PC-9 (cell line): ENCODE measurements at regions of chr2 and their contacts with region 1.

Region 1: GRCh38 chr2:235330775-235331451 is 162.9 kb upstream of the AGAP1 start:
- DNase-seq: peak; percentile 83 to 95
- H3K4me3 ChIP-seq: peak overlapping the region; percentile 20; the same call in 1 of the 2 replicates
- H3K27ac ChIP-seq: peak overlapping the region; percentile 46
- H3K4me1 ChIP-seq: peaks cover 19% of the 10 kb centered on the region
- H3K27me3 ChIP-seq: no peaks in the 10 kb centered on the region
- CTCF ChIP-seq: no peak

Region 2: GRCh38 chr2:235087812-235088495 is 243.0 kb before region 1 on chr2:
- CTCF ChIA-PET with region 1: no interaction called
- POLR2A ChIA-PET with region 1: no interaction called
- intact Hi-C with region 1: no loop called
- DNase-seq: no peak
- H3K4me3 ChIP-seq: no peak overlapping the region
- H3K27ac ChIP-seq: no peak overlapping the region
- H3K4me1 ChIP-seq: no peaks in the 10 kb centered on the region
- H3K27me3 ChIP-seq: no peaks in the 10 kb centered on the region
- CTCF ChIP-seq: no peak

Region 3: DNA sequence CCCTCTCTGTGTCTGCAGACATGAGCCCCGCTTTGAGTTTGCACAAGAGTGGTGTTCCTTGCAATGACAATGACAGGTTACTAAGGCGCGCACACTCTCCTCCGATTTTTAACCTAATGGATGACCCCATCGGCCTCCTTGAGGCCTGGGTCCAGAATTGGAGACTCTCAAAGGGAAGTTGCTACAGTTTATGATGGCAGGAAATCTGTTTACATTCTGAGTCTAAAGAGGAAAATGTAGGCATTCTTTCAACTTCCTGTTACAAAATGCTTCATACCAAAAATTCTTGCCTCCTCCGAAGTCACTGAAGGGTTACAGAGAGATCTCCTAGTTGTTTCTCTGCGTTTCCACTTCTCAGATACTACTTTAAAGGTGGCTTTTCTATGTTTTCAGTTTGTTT is 62.4 kb before region 1 on chr2:
- CTCF ChIA-PET with region 1: no interaction called
- POLR2A ChIA-PET with region 1: no interaction called
- intact Hi-C with region 1: loop called (anchors 5 kb)
- DNase-seq: peak; percentile 10 to 79
- H3K4me3 ChIP-seq: no peak overlapping the region
- H3K27ac ChIP-seq: peak overlapping the region; percentile 44
- H3K4me1 ChIP-seq: peaks cover 45% of the 10 kb centered on the region
- H3K27me3 ChIP-seq: no peaks in the 10 kb centered on the region
- CTCF ChIP-seq: no peak

Region 4: GRCh38 chr2:235314371-235314930 is 16.5 kb before region 1 on chr2:
- CTCF ChIA-PET with region 1: no interaction called
- POLR2A ChIA-PET with region 1: interaction called, 21 read pairs
- intact Hi-C with region 1: no loop called
- DNase-seq: no peak
- H3K4me3 ChIP-seq: no peak overlapping the region
- H3K27ac ChIP-seq: no peak overlapping the region
- H3K4me1 ChIP-seq: peaks cover 12% of the 10 kb centered on the region
- H3K27me3 ChIP-seq: no peaks in the 10 kb centered on the region
- CTCF ChIP-seq: no peak

Region 5: GRCh38 chr2:235406430-235406829 is 75.5 kb after region 1 on chr2:
- CTCF ChIA-PET with region 1: no interaction called
- POLR2A ChIA-PET with region 1: interaction called, 11 read pairs
- intact Hi-C with region 1: no loop called
- DNase-seq: no peak
- H3K4me3 ChIP-seq: no peak overlapping the region
- H3K27ac ChIP-seq: no peak overlapping the region
- H3K4me1 ChIP-seq: peaks cover 15% of the 10 kb centered on the region
- H3K27me3 ChIP-seq: no peaks in the 10 kb centered on the region
- CTCF ChIP-seq: no peak